Mammary epithelial cell (primary cell): ENCODE measurements at regions of chr3 and their contacts with region 1.

Region 1: GRCh38 chr3:5057857-5058324 is 64.2 kb upstream of the ARL8B start:
- DNase-seq: peak; percentile 86
- H3K4me3 ChIP-seq: no peak overlapping the region
- H3K27ac ChIP-seq: no peak overlapping the region
- H3K4me1 ChIP-seq: peaks cover 3% of the 10 kb centered on the region
- H3K27me3 ChIP-seq: no peaks in the 10 kb centered on the region
- CTCF ChIP-seq: peak; percentile 76

Region 2: GRCh38 chr3:4656059-4656458 is 401.8 kb before region 1 on chr3:
- CTCF ChIA-PET with region 1: interaction called, 4 read pairs
- dilution Hi-C with region 1: no loop called
- in situ Hi-C with region 1: loop called in 1 of 2 experiments (anchors 10 kb)
- intact Hi-C with region 1: loop called (anchors 1 kb)
- DNase-seq: peak; percentile 40
- H3K4me3 ChIP-seq: no peak overlapping the region
- H3K27ac ChIP-seq: no peak overlapping the region
- H3K4me1 ChIP-seq: peaks cover under 1% of the 10 kb centered on the region
- H3K27me3 ChIP-seq: no peaks in the 10 kb centered on the region
- CTCF ChIP-seq: peak; percentile 93 to 95

Region 3: GRCh38 chr3:4693620-4694019 is 364.3 kb before region 1 on chr3:
- CTCF ChIA-PET with region 1: no interaction called
- dilution Hi-C with region 1: loop called (anchors 10 kb)
- in situ Hi-C with region 1: no loop called
- intact Hi-C with region 1: no loop called
- DNase-seq: no peak
- H3K4me3 ChIP-seq: no peak overlapping the region
- H3K27ac ChIP-seq: no peak overlapping the region
- H3K4me1 ChIP-seq: no peaks in the 10 kb centered on the region
- H3K27me3 ChIP-seq: no peaks in the 10 kb centered on the region
- CTCF ChIP-seq: no peak

Region 4: DNA sequence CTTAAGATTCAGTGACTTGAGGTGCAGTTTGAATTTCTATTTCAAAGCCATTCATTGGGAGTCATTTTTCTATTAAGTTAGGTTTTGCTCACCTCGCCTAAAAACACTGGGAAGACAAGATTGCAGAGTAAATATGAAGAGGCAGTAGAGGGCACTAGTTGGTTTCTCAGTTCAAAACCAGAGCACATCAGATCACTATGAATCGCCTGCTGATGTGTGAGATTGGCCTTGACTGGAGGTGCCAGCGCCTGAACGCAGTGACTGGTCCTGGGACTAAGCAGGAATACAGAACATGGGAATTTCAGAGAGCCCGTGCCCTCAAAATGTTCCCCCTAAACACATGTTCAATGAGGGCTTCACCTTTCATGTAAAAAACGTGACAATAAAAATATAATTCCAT is 335.8 kb before region 1 on chr3:
- CTCF ChIA-PET with region 1: interaction called, 5 read pairs
- dilution Hi-C with region 1: no loop called
- in situ Hi-C with region 1: loop called (anchors 10 kb)
- intact Hi-C with region 1: loop called (anchors 1 kb)
- DNase-seq: peak; percentile 81
- H3K4me3 ChIP-seq: no peak overlapping the region
- H3K27ac ChIP-seq: peak overlapping the region; percentile 71
- H3K4me1 ChIP-seq: peaks cover 32% of the 10 kb centered on the region
- H3K27me3 ChIP-seq: no peaks in the 10 kb centered on the region
- CTCF ChIP-seq: peak; percentile 37 to 61

Region 5: GRCh38 chr3:4888913-4889846 is 168.7 kb before region 1 on chr3:
- CTCF ChIA-PET with region 1: no interaction called
- dilution Hi-C with region 1: no loop called
- in situ Hi-C with region 1: no loop called
- intact Hi-C with region 1: no loop called
- DNase-seq: no peak
- H3K4me3 ChIP-seq: no peak overlapping the region
- H3K27ac ChIP-seq: no peak overlapping the region
- H3K4me1 ChIP-seq: no peaks in the 10 kb centered on the region
- H3K27me3 ChIP-seq: no peaks in the 10 kb centered on the region
- CTCF ChIP-seq: no peak

Region 6: DNA sequence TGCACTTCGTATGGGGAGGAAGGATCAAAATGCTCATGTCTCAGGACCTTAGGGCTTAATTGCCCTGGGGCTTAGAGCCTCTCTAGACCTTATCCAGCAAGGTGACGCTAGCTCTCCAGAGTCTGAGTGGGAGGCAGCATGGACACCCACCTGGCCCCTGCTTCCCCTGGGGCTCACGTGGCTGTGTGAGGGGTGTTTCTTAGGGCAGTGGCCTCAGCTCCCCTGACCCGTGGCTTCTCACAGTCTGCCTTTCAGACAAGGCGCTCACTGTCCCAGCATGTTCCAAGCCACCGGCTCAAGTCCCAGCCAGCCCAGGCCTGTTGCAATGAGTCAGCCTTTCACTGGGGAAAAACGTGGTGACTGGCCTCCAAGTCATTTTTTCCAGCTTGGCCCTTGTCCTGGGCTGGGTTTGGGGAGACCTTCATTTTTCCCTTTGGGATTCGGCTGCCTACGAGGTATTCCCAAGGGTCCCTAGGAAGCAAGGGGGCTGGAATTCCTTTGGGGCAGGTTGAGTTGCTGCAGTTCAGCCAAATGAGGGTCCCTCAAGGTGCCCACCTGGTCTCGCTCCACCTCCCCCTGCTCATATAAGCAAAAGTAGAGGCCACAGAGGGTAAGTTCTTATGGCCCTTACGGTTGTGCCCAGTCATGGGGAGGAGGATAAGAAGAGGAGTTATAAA is 62.9 kb before region 1 on chr3:
- CTCF ChIA-PET with region 1: no interaction called
- dilution Hi-C with region 1: loop called (anchors 5 kb)
- in situ Hi-C with region 1: no loop called
- intact Hi-C with region 1: no loop called
- DNase-seq: peak; percentile 99
- H3K4me3 ChIP-seq: no peak overlapping the region
- H3K27ac ChIP-seq: peak overlapping the region; percentile 98
- H3K4me1 ChIP-seq: peaks cover 42% of the 10 kb centered on the region
- H3K27me3 ChIP-seq: no peaks in the 10 kb centered on the region
- CTCF ChIP-seq: no peak